ENCODE measurements at regions of chr7 and their contacts with region 1.

Region 1: DNA sequence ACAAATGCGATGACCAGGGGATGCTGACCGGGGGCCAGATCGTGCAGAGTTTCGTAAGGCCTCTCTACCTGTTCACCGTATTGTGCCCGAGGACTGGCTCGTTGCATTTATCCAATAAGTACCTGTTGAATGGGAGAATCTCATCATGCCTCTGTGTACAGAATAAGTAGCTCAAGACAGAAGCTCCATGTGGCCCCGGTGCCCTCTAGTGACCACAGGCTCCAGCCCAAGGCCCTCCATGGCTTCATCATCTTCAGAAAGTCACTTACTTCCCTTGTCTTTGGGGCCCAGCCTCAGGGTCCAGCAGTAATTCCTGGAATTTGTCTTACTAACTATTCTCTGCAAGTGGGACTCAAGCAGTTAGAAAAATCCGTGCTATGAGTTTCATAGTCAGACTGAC is 151.0 kb downstream of the CHN2 start:
- DNase-seq: peak; percentile 31
- H3K4me3 ChIP-seq: no peak overlapping the region
- H3K27ac ChIP-seq: no peak overlapping the region
- H3K4me1 ChIP-seq: no peaks in the 10 kb centered on the region
- H3K27me3 ChIP-seq: no peaks in the 10 kb centered on the region
- CTCF ChIP-seq: peak in 2 of 4 experiments; percentile 17 to 29
- POLR2A ChIP-seq: no peak

Region 2: GRCh38 chr7:29189743-29190201 is 155.8 kb before region 1 on chr7:
- intact Hi-C with region 1: loop called (anchors 10 kb)
- DNase-seq: peak; percentile 58
- H3K4me3 ChIP-seq: no peak overlapping the region
- H3K27ac ChIP-seq: no peak overlapping the region
- H3K4me1 ChIP-seq: no peaks in the 10 kb centered on the region
- H3K27me3 ChIP-seq: no peaks in the 10 kb centered on the region
- CTCF ChIP-seq: peak; percentile 69 to 76 (median 75)
- POLR2A ChIP-seq: no peak

Measured in prostate gland (tissue), 2 donors.